ENCODE measurements at regions of chr5 and their contacts with region 1.

Region 1: DNA sequence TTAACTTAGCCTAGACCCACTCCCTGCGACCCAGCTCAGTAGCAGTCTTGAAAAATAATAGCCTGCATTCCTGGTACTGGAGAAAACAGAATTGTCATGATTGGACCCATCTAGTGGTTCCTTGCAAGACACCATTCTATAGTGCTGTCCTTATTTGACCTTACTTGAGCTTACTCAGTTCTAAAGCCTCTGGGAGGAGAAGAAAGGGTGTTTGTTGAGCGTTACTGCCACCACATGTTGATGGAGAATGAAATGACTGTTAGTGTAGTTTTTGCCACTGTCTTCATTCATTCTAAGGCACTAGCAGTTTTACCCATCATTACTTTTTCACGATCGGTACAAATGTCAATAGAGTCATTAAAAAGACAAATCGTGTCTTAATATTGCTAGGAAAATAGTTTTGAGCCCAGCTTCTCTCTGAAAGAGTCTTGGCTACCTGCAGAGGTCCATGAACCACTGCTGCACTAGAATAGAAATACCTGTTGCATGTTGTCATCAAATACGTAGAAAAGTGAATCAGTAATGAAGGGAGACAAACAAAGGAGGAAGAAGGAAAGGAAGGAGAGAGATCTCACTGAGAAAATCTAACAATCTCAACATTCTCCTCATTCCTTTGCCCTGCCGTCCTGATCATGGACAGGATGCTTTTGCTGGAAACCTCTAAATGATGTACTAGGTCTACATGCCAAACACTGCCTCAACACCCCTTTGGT is 96.0 kb downstream of the LIX1 start:
- DNase-seq: no peak
- ATAC-seq: no peak
- H3K4me3 ChIP-seq: no peak overlapping the region
- H3K27ac ChIP-seq: no peak overlapping the region
- H3K4me1 ChIP-seq: no peaks in the 10 kb centered on the region
- H3K27me3 ChIP-seq: no peaks in the 10 kb centered on the region
- CTCF ChIP-seq: no peak

Region 2: GRCh38 chr5:96807075-96807654 is 239.3 kb before region 1 on chr5:
- intact Hi-C with region 1: no loop called
- DNase-seq: peak; percentile 88 to 93
- ATAC-seq: peak; percentile 79 to 86 (median 82)
- H3K4me3 ChIP-seq: peak overlapping the region; percentile 92
- H3K27ac ChIP-seq: peak overlapping the region; percentile 99
- H3K4me1 ChIP-seq: peaks cover 18% of the 10 kb centered on the region
- H3K27me3 ChIP-seq: no peaks in the 10 kb centered on the region
- CTCF ChIP-seq: no peak

Region 3: DNA sequence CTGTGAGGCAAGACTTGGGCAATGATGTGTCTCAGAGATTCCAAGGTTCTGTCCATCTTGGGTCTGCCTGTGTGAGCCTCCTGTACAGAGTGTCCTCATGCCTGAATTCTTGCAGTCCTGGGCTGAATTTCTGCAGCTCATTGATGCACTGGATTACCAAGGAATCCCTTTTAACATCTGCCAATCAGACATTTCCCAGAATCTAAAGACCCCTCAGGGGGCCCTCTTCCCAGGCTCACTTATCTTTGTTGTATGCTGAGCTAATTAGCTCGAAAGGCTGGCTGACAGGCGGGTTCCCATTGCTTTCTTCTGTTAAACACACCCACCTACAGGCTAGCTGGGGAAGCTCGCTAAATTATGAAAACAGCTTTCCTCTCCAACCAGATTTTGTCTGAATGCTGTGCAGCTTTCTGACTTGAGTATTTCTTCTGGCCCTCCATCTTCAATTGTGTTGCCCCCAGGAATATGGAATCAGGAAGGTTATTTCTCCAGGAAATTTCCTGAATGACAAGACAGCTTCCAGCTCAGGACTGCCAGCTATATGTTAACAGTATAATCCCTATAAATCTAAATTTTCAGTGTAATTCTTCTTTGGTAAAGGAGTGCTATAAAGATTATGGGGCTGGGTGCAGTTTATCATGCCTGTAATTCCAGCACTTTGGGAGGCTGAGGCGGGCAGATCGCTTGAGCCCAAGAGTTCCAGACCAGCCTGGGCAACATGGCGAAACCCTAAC is 96.3 kb after region 1 on chr5 and contains the start of gene LIX1:
- intact Hi-C with region 1: loop called in 1 of 2 experiments (anchors 5 kb)
- DNase-seq: no peak
- ATAC-seq: peak in 2 of 4 donors; percentile 55 to 67
- H3K4me3 ChIP-seq: no peak within 1 kb of the TSS
- H3K27ac ChIP-seq: no peak within 1 kb of the TSS
- H3K4me1 ChIP-seq: no peaks in the 10 kb centered on the region
- H3K27me3 ChIP-seq: no peaks in the 10 kb centered on the region
- CTCF ChIP-seq: peak; percentile 39
- total RNA-seq, gene LIX1: not detected